Uterus (tissue), 4 donors: ENCODE measurements at regions of chr16 and their contacts with region 1.

Region 1: GRCh38 chr16:87778830-87779579 is 13.2 kb upstream of the KLHDC4 start:
- DNase-seq: peak; percentile 74 to 86
- H3K4me3 ChIP-seq: no peak overlapping the region
- H3K27ac ChIP-seq: no peak overlapping the region
- H3K4me1 ChIP-seq: no peaks in the 10 kb centered on the region
- H3K27me3 ChIP-seq: no peaks in the 10 kb centered on the region
- CTCF ChIP-seq: peak; percentile 85 to 96 (median 91)
- POLR2A ChIP-seq: peak in 1 of 2 donors; percentile 13

Region 2: DNA sequence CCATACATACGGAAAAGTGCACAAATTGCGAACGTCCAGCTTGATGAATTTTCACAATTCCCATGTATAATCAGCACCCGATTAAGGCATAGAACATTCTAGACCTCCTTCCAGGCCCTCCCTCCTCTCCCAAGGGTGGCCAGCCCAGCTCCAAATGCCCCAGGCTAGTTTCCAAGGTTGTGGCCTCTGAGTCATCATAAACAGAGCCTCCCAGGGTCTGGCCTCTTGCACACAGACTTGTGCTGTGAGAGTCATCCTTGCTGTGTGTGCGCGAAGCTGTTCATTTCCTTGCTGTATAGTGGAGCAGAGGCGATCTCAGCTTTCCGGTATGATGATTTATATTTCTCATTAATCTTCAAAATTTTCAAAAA is 197.2 kb before region 1 on chr16:
- intact Hi-C with region 1: no loop called
- DNase-seq: peak; percentile 85 to 93
- H3K4me3 ChIP-seq: peak overlapping the region in 1 of 2 donors; percentile 17
- H3K27ac ChIP-seq: peak overlapping the region; percentile 94
- H3K4me1 ChIP-seq: peaks cover 13 to 16% of the 10 kb centered on the region in 2 donors
- H3K27me3 ChIP-seq: no peaks in the 10 kb centered on the region
- CTCF ChIP-seq: no peak
- POLR2A ChIP-seq: no peak

Region 3: DNA sequence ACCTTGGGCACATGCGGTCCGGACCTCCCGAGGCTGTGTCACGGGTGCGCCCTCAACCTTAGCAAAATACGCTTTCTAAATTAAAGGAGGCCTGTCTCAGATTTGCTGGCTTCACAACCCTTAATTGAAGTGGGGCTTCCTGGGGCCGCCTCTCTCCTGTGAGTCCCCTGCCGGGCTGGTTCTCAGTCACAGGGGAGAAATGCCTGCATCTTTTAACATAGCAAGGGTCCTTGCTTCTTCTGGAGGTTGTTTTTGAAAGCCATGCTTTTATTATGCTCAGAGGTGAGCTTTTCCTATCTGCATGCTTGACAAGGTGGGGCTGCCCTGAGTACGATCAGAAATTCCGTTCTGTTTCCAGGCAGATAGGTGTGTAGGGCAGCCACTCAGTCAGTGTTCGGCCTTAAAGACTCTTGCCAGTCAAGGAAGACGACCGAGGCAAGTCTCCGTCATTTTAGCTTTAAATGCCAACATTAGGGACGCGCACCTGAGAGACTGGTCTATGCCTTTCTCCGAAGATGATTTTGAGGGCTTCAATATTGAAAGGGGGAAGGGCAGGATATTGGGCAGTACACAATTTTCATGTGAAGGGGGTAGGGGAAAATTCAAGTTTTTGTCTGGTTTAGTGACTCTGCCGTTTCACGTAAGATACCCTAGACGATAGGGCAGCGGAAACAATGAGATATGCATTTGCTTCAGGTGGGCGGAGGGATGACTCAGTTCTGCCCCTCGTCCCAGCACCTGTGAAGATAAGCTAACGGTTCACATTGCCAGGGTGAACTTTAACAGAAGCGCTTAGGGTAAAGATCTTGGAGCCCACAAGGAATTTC is 95.8 kb after region 1 on chr16:
- intact Hi-C with region 1: loop called (anchors 5 kb)
- DNase-seq: no peak
- H3K4me3 ChIP-seq: no peak overlapping the region
- H3K27ac ChIP-seq: no peak overlapping the region
- H3K4me1 ChIP-seq: no peaks in the 10 kb centered on the region
- H3K27me3 ChIP-seq: no peaks in the 10 kb centered on the region
- CTCF ChIP-seq: no peak
- POLR2A ChIP-seq: no peak